Ascending aorta (tissue), 2 donors: ENCODE measurements at regions of chr4 and their contacts with region 1.

Region 1: DNA sequence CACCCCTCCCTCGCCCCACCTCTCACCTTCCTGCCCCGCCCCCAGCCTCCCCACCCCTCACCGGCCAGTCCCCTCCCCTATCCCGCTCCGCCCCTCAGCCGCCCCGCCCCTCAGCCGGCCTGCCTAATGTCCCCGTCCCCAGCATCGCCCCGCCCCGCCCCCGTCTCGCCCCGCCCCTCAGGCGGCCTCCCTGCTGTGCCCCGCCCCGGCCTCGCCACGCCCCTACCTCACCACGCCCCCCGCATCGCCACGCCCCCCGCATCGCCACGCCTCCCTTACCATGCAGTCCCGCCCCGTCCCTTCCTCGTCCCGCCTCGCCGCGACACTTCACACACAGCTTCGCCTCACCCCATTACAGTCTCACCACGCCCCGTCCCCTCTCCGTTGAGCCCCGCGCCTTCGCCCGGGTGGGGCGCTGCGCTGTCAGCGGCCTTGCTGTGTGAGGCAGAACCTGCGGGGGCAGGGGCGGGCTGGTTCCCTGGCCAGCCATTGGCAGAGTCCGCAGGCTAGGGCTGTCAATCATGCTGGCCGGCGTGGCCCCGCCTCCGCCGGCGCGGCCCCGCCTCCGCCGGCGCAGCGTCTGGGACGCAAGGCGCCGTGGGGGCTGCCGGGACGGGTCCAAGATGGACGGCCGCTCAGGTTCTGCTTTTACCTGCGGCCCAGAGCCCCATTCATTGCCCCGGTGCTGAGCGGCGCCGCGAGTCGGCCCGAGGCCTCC is at the starts of genes HTT and HTT-AS:
- DNase-seq: peak; percentile 80 to 97
- H3K4me3 ChIP-seq: peak within 1 kb of the TSS; percentile 95 to 99
- H3K27ac ChIP-seq: peak within 1 kb of the TSS; percentile 86 to 98
- H3K4me1 ChIP-seq: peaks cover 12 to 14% of the 10 kb centered on the region in 2 donors
- H3K27me3 ChIP-seq: no peaks in the 10 kb centered on the region
- CTCF ChIP-seq: no peak
- total RNA-seq, gene HTT: 23.7 TPM
- total RNA-seq, gene HTT-AS: not detected

Region 2: DNA sequence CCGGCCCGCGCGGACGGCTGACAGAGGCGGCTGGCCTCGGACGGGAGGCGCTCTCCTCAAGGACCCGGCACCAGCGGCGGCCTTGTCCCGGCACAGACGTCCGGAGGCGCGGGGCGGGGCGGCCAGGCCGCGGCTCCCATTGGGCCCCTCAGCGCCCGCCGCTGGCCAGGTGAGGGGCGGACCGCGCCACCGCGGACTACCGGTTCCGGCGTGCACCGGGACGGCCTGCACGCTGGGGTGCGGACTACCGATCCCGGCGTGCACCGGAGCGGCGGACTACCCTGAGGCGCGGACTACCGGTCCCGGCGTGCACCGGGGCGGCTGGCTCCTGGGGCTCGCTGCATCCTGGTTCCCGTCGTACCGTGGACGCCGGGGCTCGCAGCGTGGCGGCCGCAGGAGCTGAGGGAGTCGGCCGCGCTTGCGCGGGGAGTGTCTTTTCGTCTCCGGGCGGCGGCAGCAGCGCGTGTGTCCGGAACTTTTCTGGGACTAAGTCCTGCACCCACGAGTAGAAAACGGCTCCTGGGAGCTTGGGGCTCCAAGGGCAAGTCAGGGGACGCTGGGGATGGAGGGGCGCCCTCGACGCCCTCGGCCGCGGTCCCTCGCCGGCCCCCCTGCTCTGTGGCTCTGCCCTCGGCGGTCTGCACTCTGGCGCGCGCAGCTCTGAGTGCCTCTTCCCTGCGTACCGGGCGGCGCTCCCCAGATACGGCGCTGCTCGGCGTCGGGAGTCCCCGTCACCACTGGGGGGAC is 1218.0 kb before region 1 on chr4 and contains the start of gene LETM1:
- intact Hi-C with region 1: loop called (anchors 10 kb)
- DNase-seq: peak; percentile 86 to 97
- H3K4me3 ChIP-seq: peak within 1 kb of the TSS; percentile 85 to 86
- H3K27ac ChIP-seq: peak within 1 kb of the TSS; percentile 78 to 82
- H3K4me1 ChIP-seq: peaks cover 0 to 10% of the 10 kb centered on the region in 2 donors
- H3K27me3 ChIP-seq: no peaks in the 10 kb centered on the region
- CTCF ChIP-seq: peak in 1 of 3 experiments; percentile 28
- total RNA-seq, gene LETM1: 37.7 TPM

Region 3: GRCh38 chr4:2241410-2242353 is 832.6 kb before region 1 on chr4 and contains the starts of genes HAUS3 and POLN:
- intact Hi-C with region 1: loop called (anchors 5 kb)
- DNase-seq: peak; percentile 90 to 99
- H3K4me3 ChIP-seq: peak within 1 kb of the TSS; percentile 65 to 97
- H3K27ac ChIP-seq: peak within 1 kb of the TSS; percentile 60 to 69
- H3K4me1 ChIP-seq: peaks cover 6 to 37% of the 10 kb centered on the region in 2 donors
- H3K27me3 ChIP-seq: no peaks in the 10 kb centered on the region
- CTCF ChIP-seq: no peak
- total RNA-seq, gene HAUS3: 9.0 TPM
- total RNA-seq, gene POLN: 0.21 TPM

Region 4: DNA sequence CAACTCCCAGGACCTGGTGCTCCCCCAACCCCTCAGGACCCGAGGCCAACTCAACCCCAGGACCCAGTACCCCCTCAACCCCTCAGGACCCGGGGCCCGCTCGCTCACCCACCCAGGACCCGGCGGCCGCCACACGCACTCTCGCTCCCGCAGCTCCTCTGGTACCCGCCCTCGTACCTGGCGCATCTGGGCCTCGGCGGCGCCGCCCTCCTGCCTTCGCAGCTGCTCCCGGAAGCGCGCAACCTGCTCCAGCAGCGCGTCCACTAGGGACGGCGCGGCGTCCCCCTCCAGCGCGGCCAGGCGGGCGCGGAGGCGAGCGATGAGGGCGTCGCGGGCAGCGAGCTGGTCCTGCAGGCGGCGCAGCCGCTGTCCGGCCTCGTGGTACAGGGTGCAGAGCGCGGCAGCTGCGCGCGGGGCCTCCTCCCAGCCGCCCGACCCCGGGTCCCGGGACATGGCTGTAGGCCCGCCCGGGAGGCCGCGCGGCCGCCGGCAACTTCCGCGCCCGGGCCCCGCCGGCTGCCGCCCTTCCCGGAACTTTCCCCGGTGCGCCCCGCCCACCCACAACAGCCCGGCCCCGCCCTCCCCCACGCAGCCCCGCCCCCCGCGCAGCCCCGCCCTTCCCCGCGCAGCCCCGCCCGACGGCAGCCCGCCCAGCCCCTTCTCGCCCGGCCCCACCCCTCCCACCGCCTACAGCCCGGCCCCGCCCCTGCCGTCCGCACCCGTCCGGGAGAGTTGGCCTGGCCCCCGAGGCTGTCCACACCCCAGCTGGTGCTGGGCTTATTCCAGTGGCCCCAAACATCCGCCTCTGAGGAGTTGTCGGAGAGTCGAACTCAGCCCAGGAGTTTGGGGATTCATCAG is 318.2 kb before region 1 on chr4 and contains the start of gene TNIP2:
- intact Hi-C with region 1: loop called (anchors 5 kb)
- DNase-seq: peak in 1 of 2 donors; percentile 92
- H3K4me3 ChIP-seq: peak within 1 kb of the TSS; percentile 90 to 95
- H3K27ac ChIP-seq: peak within 1 kb of the TSS; percentile 82 to 87
- H3K4me1 ChIP-seq: peaks cover 4 to 10% of the 10 kb centered on the region in 2 donors
- H3K27me3 ChIP-seq: no peaks in the 10 kb centered on the region
- CTCF ChIP-seq: peak; percentile 11 to 59 (median 28)
- total RNA-seq, gene TNIP2: 65.6 TPM

Region 5: DNA sequence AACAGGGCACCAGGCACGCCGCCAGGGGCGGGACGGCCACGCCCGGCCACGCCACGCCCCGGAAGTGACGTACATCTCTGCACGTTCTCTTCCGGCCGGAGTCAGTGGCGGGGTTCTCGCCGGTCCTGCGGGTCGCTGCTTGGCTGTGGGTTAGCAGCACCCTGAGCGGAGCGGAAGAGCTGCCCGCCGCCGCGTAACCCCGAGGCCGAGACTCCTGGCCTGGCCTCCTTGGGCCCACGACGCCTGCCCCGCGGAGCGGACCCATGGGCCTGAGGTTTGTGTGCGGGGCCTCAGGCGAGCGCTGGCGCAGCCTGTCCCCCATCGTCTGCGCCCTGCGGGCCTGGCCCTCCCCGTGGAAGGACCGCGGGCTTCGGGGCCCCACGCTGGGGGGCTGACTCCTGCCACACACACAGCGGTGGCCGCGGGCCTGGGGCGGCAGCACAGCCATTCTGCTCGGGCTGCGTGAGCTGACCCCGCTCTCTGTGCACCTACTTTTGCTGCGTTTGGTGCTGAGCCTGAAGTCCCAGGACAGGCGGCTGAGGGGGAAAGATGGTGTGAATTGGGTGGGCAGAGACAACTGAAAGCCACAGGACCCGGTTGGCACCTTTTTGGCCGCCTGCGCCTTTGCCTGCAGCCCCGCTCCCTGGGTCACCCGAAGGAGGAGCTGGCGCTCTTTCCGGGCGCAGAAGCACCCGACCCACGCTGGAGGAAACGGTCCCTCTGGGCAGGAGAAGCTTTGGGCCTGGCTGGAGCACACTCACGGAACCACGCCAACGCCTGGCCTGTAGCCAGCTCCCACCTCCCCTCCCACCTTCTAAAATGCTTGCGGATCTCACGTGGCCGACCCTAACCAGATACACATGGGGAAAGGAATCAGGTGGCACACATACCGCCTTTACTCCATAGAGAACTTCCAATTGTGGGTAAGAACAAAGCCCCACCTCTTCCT is 139.2 kb before region 1 on chr4:
- intact Hi-C with region 1: loop called (anchors 2 kb)
- DNase-seq: peak; percentile 72 to 95
- H3K4me3 ChIP-seq: peak overlapping the region; percentile 59 to 76
- H3K27ac ChIP-seq: peak overlapping the region; percentile 77 to 79
- H3K4me1 ChIP-seq: peaks cover 0 to 21% of the 10 kb centered on the region in 2 donors
- H3K27me3 ChIP-seq: no peaks in the 10 kb centered on the region
- CTCF ChIP-seq: no peak

Region 6: GRCh38 chr4:3148926-3149325 is 74.7 kb after region 1 on chr4:
- intact Hi-C with region 1: no loop called
- DNase-seq: no peak
- H3K4me3 ChIP-seq: no peak overlapping the region
- H3K27ac ChIP-seq: no peak overlapping the region
- H3K4me1 ChIP-seq: no peaks in the 10 kb centered on the region
- H3K27me3 ChIP-seq: no peaks in the 10 kb centered on the region
- CTCF ChIP-seq: no peak

Region 7: DNA sequence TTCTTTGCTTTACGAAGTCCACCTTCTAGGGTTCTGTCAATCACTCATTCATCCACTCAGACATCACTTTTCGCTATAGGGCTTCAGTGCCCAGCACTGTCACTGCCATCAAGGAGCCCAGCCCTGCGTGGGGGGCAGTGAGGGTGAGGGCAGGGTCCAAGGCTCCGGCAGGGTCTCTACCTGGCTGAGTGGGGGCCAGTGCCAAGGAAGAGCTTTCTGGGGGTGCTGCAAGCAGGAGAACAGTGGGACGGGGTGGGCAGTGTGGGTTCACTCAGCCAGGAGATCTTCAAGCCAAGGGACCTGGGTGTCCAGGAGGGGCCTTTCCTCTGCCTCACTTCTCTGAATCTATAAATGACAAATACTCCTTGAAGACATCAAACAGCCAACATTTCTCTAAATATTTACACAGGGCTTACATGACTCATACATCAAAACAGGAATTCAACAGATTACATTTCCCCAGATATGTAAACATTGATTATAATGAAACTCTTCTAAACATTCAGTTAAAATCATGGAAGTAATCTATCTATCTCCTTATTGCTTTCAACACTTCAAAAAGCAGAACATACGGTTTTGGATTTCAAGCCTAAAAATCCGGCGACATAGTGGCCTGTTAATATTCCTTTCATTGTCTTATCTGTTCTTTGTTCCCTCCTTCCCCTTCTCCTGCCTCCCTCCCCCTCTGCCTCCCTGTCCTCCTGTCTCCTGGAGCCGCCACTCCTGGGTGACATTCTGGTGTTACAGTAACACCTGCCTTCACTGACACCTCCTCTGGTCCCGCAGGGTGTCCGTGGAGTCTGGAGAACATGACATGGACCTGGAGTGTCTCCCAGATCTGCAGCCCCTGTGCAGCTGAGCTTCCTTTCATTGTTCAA is 597.6 kb after region 1 on chr4:
- intact Hi-C with region 1: no loop called
- DNase-seq: no peak
- H3K4me3 ChIP-seq: no peak overlapping the region
- H3K27ac ChIP-seq: no peak overlapping the region
- H3K4me1 ChIP-seq: no peaks in the 10 kb centered on the region
- H3K27me3 ChIP-seq: no peaks in the 10 kb centered on the region
- CTCF ChIP-seq: no peak